H1 (cell line): ENCODE measurements at regions of chr17 and their contacts with region 1.

Region 1: DNA sequence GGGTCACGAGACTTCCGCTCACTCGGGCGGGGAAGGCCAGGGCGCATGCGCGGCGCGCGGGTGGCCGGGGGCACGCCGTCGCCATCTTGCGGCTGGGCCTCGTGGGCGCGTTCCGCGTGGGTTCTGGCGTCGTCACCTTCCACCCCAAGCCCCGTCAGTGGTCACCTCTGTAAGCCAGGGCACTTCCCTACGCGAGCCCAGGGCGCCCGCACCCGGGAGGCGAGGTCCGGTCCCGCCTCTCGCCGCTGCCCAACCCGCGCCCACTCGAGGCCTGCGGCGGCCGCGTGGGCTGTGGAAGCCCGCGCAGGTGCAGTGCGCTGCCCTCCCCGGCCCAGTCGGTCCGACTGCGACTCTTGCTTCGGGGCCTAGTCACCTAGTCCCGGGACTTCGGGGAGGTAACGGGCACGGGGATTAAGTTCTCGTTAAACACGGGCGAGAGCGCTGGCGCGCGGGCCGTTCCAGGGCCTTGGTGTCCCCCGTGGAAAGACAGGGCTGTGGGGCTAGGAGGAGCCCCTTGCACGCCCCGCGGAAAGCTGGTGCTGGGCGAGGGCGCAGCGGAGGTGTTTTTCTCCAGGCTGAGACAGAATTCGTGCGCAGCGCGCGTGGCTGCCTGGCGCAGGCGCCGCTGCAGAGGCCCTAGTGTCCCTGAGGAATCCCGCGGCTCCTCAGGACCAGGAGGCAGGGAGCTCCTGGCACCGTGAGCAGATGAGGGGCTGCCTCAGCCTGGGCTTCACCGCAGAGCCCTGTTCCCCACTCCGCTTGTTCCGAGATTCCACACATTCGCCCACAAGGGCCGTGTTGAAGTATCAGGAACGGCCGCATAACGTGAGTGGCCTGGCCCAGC is 472 bp upstream of the ARHGDIA start:
- DNase-seq: peak in 1 of 2 experiments; percentile 93
- H3K4me3 ChIP-seq: peak overlapping the region; percentile 63 to 88 (median 71)
- H3K27ac ChIP-seq: peak overlapping the region; percentile 82; the same call in 1 of the 2 replicates
- H3K4me1 ChIP-seq: peaks cover 0 to 31% (median 21%) of the 10 kb centered on the region in 4 experiments; a peak in 6 of 7 replicates
- H3K27me3 ChIP-seq: no peaks in the 10 kb centered on the region
- CTCF ChIP-seq: peak in 1 of 3 experiments; percentile 2; a peak in 1 of 4 replicates
- EP300 ChIP-seq: no peak
- POLR2A ChIP-seq: peak in 1 of 2 experiments; percentile 65; a peak in 2 of 3 replicates
- RAD21 ChIP-seq: no peak

Region 2: GRCh38 chr17:81733507-81734404 is 137.9 kb before region 1 on chr17:
- CTCF ChIA-PET with region 1: interaction called, 10 read pairs
- POLR2A ChIA-PET with region 1: interaction called, 36 read pairs
- DNase-seq: peak in 1 of 2 experiments; percentile 97
- H3K4me3 ChIP-seq: no peak overlapping the region
- H3K27ac ChIP-seq: no peak overlapping the region
- H3K4me1 ChIP-seq: peaks cover 0 to 17% (median 5%) of the 10 kb centered on the region in 4 experiments; a peak in 5 of 7 replicates
- H3K27me3 ChIP-seq: no peaks in the 10 kb centered on the region; a peak in 1 of 7 replicates
- CTCF ChIP-seq: peak; percentile 90 to 96 (median 92)
- EP300 ChIP-seq: no peak
- POLR2A ChIP-seq: no peak
- RAD21 ChIP-seq: peak; percentile 97 to 98

Region 3: DNA sequence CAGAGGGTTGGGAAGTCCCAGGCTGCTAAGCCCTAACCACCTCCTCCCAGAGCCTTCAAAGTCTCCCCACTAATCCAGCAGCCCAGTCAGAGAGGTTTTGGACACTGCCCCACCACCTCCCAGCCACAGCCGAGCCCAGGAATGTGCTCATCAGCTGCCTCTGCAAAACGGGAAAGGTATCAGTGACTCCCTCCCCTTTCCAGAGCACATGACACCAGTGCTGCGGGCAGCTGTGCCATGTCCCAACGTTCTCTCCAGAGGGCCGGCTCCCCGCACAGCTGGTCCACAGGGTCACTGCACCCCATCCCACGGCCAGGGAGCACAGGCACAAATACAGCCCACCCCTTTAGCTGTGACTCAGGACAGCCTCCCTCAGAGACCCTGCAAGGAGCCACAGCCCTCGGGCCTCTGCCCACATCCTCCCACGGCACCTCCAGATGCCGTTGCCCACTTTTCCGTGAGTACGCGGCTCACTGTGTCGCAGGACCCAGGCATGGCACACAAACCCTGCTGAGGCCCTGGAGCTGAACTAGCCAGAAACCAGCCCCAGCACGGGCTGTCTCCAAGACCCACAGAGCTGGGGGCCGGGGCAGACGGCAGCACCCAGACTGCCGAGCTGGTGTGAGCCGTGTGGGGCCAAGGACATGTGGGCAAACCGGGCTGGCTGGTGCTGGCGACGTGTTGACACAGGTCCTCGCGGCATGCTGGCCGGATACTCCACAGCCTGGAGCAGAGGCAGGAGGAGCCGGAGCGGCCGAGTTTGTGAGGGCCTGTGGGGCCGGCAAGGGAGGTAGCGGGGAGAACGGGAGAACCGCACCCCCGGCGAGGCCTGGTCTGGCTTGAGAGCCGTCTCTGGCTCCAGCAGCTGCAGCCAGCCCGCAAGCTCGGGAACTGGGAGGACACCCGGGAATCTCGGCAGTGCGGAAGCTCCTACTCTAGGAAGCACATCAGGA is 30.5 kb before region 1 on chr17:
- CTCF ChIA-PET with region 1: interaction called, 11 read pairs
- POLR2A ChIA-PET with region 1: interaction called, 7 read pairs
- DNase-seq: no peak
- H3K4me3 ChIP-seq: no peak overlapping the region
- H3K27ac ChIP-seq: 0 out of 2 replicates have a peak overlapping the region, but pooled peaks have one; percentile 2
- H3K4me1 ChIP-seq: peaks cover 0 to 3% (median 0%) of the 10 kb centered on the region in 4 experiments; a peak in 2 of 7 replicates
- H3K27me3 ChIP-seq: no peaks in the 10 kb centered on the region; a peak in 2 of 7 replicates
- CTCF ChIP-seq: no peak
- EP300 ChIP-seq: no peak
- POLR2A ChIP-seq: no peak
- RAD21 ChIP-seq: no peak

Region 4: DNA sequence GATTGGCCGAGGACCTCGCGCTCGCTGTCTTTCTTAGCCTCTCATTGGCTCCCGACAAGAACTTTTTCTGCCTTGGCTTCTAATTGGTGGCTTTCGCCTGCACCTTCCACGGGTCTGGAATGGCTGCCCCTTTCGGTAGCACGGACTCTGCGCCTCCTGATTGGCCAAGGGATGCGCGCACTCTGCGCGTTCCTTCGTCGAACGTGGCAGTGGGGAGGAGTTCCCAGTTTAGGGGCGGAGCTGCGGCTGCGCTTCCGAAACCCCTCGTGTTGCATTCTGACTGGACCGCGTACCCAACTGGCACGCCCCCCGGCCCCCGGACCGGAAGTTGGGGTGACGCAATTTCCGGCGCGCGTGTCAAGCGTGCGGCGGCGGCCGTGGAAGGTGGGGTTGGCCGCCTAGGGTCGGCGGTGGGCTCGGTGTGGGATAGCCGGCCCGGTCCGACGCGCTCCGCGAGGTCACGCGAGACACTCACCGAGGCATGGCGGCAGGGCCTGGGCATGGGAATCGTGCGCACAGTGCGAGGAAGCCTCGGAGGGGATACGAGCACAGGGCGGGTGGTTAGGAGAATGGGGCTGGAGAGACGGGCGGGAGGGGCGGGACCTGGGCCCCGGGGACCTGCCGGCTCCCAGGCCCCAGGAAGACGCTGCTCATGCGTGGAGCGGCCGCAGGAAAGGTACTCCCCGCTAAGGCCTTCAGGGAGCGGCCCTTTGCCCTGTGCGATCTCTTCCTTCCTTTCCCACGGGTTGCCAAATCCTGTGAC is 10.7 kb before region 1 on chr17:
- CTCF ChIA-PET with region 1: interaction called, 18 read pairs
- POLR2A ChIA-PET with region 1: interaction called, 17 read pairs
- DNase-seq: peak; percentile 99 to 100
- H3K4me3 ChIP-seq: peak overlapping the region; percentile 79 to 95 (median 90)
- H3K27ac ChIP-seq: peak overlapping the region; percentile 69; the same call in 1 of the 2 replicates
- H3K4me1 ChIP-seq: peaks cover 0 to 5% (median 5%) of the 10 kb centered on the region in 4 experiments; a peak in 5 of 7 replicates
- H3K27me3 ChIP-seq: no peaks in the 10 kb centered on the region
- CTCF ChIP-seq: no peak
- EP300 ChIP-seq: no peak
- POLR2A ChIP-seq: peak; percentile 52 to 69; a peak in 2 of 3 replicates
- RAD21 ChIP-seq: no peak

Region 5: GRCh38 chr17:81902023-81902652 is 30.5 kb after region 1 on chr17 and contains the start of gene NPB:
- CTCF ChIA-PET with region 1: interaction called, 10 read pairs
- POLR2A ChIA-PET with region 1: interaction called, 10 read pairs
- DNase-seq: peak in 1 of 2 experiments; percentile 75
- H3K4me3 ChIP-seq: peak within 1 kb of the TSS; percentile 19 to 61 (median 44)
- H3K27ac ChIP-seq: no peak within 1 kb of the TSS
- H3K4me1 ChIP-seq: peaks cover 0 to 8% (median 2%) of the 10 kb centered on the region in 4 experiments; a peak in 3 of 7 replicates
- H3K27me3 ChIP-seq: peaks cover 0 to 22% (median 14%) of the 10 kb centered on the region in 4 experiments; a peak in 5 of 7 replicates
- CTCF ChIP-seq: no peak
- EP300 ChIP-seq: no peak
- POLR2A ChIP-seq: 0 out of 3 replicates have a peak, but pooled peaks of 1 of the 2 experiments have one; percentile 26
- RAD21 ChIP-seq: no peak
- total RNA-seq, gene NPB: 0.80 and 1.5 TPM in 2 replicates